Activated CD4-positive, alpha-beta memory T cell treated with anti-CD3 and anti-CD28 coated beads for 36 hours (primary cell): ENCODE measurements at regions of chr7 and their contacts with region 1.

Region 1: GRCh38 chr7:134316539-134317344 is at the start of gene SLC35B4:
- DNase-seq: peak; percentile 97
- H3K4me3 Mint-ChIP-seq: peak within 1 kb of the TSS; percentile 90
- H3K27ac Mint-ChIP-seq: peak within 1 kb of the TSS; percentile 72
- H3K4me1 Mint-ChIP-seq: peaks cover 19% of the 10 kb centered on the region
- H3K27me3 Mint-ChIP-seq: no peaks in the 10 kb centered on the region
- total RNA-seq, gene SLC35B4: 10.9 to 14.5 TPM

Region 2: GRCh38 chr7:133252858-133253518 is 1063.8 kb before region 1 on chr7 and contains the start of gene EXOC4:
- CTCF ChIA-PET with region 1: no interaction called
- POLR2A ChIA-PET with region 1: no interaction called
- intact Hi-C with region 1: loop called (anchors 1 kb)
- DNase-seq: peak; percentile 95
- H3K4me3 Mint-ChIP-seq: peak within 1 kb of the TSS; percentile 89
- H3K27ac Mint-ChIP-seq: peak within 1 kb of the TSS; percentile 85
- H3K4me1 Mint-ChIP-seq: peaks cover 30% of the 10 kb centered on the region
- H3K27me3 Mint-ChIP-seq: no peaks in the 10 kb centered on the region
- total RNA-seq, gene EXOC4: 55.8 to 60.8 TPM

Region 3: GRCh38 chr7:134339475-134339874 is 22.7 kb after region 1 on chr7:
- CTCF ChIA-PET with region 1: no interaction called
- POLR2A ChIA-PET with region 1: no interaction called
- intact Hi-C with region 1: no loop called
- DNase-seq: no peak
- H3K4me3 Mint-ChIP-seq: no peak overlapping the region
- H3K27ac Mint-ChIP-seq: no peak overlapping the region
- H3K4me1 Mint-ChIP-seq: no peaks in the 10 kb centered on the region
- H3K27me3 Mint-ChIP-seq: peaks cover 10% of the 10 kb centered on the region

Region 4: DNA sequence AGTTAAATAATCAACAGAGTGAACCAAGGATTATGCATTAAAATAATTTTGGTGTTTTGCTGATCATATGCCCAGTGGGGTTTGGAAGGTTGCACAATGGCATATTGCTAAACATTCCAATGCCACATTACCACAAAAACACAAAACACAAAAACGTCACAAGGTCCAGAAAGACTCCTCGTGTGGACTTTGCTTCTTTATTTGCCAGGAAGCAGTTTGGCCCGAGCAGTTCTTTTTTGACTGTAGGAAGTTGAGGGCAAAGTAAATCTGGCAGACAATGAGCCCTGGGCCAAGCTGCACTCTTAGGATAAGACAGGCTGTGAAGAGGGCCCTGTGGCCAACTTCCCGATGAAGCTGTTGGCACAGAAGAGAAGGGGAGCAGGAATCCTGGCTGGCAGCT is 39.2 kb after region 1 on chr7:
- CTCF ChIA-PET with region 1: interaction called, 10 read pairs
- POLR2A ChIA-PET with region 1: no interaction called
- intact Hi-C with region 1: loop called (anchors 5 kb)
- DNase-seq: no peak
- H3K4me3 Mint-ChIP-seq: no peak overlapping the region
- H3K27ac Mint-ChIP-seq: no peak overlapping the region
- H3K4me1 Mint-ChIP-seq: no peaks in the 10 kb centered on the region
- H3K27me3 Mint-ChIP-seq: no peaks in the 10 kb centered on the region